ENCODE measurements at regions of chr12 and their contacts with region 1.

Region 1: DNA sequence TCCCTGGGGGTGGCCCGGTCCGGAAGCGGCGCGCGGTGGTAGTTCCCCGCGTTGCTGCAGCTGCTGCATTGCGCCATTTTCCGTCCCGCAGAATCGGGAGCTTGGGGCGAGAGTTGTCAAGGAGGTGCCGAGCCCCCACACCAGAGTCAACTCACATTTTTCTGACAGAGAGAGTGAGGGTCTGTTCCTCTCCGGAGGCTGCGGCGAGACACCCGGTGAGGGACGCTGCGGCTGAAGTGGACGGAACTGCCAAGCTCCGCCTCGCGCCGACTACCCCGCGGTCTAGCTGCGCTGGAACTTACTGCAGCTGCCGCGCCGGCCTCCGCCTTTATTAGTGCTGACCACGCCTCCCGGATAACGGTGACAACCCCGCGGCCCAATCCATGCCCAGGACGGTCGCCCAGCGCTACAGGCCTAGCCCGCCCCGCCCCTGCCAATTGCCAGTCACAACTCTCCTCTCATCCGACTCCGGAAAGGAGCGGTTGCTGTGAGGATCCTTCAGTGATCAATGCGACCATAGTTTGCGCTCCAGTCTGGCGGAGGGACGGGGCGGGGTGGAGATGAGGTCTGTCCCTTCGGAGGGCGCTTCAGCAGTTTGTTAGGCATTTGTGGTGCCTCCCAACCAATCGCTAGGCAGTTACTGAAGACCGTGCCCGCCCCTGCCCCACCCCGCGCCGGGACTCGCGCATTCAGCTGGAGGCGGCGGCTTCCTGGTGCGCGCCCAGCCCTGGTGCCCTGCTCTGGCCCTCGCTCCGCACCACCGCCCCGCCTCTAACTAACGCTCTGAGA is at the start of gene VAMP1:
- DNase-seq: peak; percentile 96

Region 2: DNA sequence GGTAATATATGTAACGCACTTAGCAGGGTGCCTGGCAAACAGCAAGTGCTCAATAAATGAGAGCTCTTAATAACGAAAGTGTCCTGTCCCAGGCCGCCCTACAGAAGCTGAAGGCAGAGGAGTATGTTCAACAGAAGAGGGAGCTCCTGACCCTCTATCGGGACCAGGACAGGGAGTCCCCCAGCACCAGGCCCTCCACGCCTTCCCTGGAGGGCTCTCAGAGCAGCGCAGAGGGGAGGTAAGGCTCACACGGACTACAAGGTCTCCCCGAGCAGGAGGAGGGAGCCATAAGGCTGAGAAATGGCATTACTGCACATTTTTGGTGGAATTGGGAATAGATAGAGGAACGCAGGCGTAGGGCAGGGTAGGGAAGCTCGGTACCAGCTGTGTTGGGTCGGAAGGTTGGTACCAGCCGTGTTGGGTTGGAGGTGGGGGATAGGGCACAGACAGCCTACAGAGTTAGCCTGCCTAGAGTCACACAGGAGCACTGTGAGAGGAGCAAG is 144.2 kb before region 1 on chr12:
- CTCF ChIA-PET with region 1: interaction called, 21 read pairs
- POLR2A ChIA-PET with region 1: interaction called, 14 read pairs
- DNase-seq: peak; percentile 77

Region 3: GRCh38 chr12:6341417-6342139 is 129.0 kb before region 1 on chr12 and contains the start of gene TNFRSF1A:
- CTCF ChIA-PET with region 1: interaction called, 7 read pairs
- POLR2A ChIA-PET with region 1: interaction called, 29 read pairs
- DNase-seq: peak; percentile 75

Region 4: DNA sequence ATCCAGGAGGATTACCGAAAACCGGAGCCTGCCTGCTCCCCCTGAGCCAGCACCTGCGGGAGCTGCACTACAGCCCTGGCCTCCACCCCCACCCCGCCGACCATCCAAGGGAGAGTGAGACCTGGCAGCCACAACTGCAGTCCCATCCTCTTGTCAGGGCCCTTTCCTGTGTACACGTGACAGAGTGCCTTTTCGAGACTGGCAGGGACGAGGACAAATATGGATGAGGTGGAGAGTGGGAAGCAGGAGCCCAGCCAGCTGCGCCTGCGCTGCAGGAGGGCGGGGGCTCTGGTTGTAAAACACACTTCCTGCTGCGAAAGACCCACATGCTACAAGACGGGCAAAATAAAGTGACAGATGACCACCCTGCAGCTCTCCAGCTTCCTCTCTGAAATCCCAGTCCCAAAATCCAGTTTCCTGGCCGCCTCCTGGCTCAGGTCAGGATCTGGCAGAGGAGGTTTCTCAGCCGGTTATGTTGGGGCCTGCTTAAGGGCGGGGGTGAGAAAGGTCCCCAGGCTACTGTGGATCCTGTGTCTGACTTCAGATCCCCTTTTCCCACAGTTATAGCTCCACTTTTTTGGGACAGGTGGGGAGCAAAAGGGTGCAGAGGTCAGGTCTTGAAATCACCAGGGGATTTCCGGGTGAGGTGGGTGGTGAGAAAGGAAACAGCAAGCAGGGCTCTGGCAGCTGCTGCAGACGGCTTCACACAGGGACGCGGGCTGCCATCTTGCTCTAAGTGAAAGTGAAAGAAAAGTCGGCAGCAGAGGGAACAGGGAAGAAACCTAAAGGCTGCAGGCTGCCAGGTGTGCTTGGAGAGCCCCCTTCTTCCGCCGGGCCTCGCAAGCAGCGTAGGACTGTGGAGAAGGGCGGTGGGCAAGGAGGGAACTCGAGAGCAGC is 19.0 kb before region 1 on chr12 and contains the start of gene TAPBPL:
- CTCF ChIA-PET with region 1: interaction called, 12 read pairs
- POLR2A ChIA-PET with region 1: interaction called, 17 read pairs
- DNase-seq: peak; percentile 53

Region 5: GRCh38 chr12:6533923-6534694 is 63.5 kb after region 1 on chr12 and contains the start of gene GAPDH:
- CTCF ChIA-PET with region 1: interaction called, 8 read pairs
- POLR2A ChIA-PET with region 1: interaction called, 63 read pairs
- DNase-seq: peak; percentile 89

Measured in HEK293T (cell line).